Common myeloid progenitor, CD34-positive (primary cell): ENCODE measurements at regions of chr14 and their contacts with region 1.

Region 1: DNA sequence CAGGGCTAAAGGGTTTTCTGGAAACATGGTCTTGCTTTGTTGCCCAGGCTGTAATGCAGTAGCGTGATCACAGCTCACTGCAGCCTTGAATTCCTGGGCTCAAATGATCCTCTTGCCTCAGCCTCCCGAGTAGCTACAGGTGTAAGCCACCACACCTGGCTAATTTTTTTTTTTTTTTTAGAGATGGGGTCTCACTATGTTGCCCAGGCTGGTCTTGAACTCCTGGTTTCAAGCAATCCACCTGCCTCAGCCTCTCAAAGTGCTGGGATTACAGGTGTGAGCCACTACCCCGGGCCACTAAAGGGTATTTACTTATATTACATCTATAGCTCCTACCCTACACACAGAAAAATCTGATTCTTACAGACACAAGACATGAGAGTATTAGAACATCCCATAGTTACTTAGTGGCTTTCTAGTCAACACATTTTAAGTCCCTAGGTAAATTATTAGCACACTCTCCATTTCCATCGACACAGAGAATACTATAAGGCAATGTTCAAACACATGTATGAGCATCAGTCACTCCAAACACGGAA is 6.2 kb upstream of the DCAF11 start:
- DNase-seq: no peak
- H3K4me3 ChIP-seq: peak overlapping the region in 1 of 7 experiments; percentile 38
- H3K27ac ChIP-seq: peak overlapping the region in 1 of 2 experiments; percentile 17
- H3K4me1 ChIP-seq: peaks cover 3 to 20% (median 9%) of the 10 kb centered on the region in 4 experiments
- H3K27me3 ChIP-seq: no peaks in the 10 kb centered on the region

Region 2: GRCh38 chr14:24013654-24014514 is 94.5 kb before region 1 on chr14:
- CTCF ChIA-PET with region 1: interaction called, 16 read pairs
- POLR2A ChIA-PET with region 1: no interaction called
- DNase-seq: peak; percentile 73 to 85 (median 79)
- H3K4me3 ChIP-seq: no peak overlapping the region
- H3K27ac ChIP-seq: no peak overlapping the region
- H3K4me1 ChIP-seq: peaks cover 0 to 4% (median 0%) of the 10 kb centered on the region in 4 experiments
- H3K27me3 ChIP-seq: no peaks in the 10 kb centered on the region

Region 3: GRCh38 chr14:24080888-24081738 is 27.3 kb before region 1 on chr14:
- CTCF ChIA-PET with region 1: interaction called, 32 read pairs
- POLR2A ChIA-PET with region 1: no interaction called
- DNase-seq: peak; percentile 43 to 84 (median 80)
- H3K4me3 ChIP-seq: peak overlapping the region; percentile 60 to 81 (median 67)
- H3K27ac ChIP-seq: no peak overlapping the region
- H3K4me1 ChIP-seq: peaks cover 7 to 27% (median 26%) of the 10 kb centered on the region in 4 experiments
- H3K27me3 ChIP-seq: peaks cover 0 to 12% (median 7%) of the 10 kb centered on the region in 5 experiments

Region 4: DNA sequence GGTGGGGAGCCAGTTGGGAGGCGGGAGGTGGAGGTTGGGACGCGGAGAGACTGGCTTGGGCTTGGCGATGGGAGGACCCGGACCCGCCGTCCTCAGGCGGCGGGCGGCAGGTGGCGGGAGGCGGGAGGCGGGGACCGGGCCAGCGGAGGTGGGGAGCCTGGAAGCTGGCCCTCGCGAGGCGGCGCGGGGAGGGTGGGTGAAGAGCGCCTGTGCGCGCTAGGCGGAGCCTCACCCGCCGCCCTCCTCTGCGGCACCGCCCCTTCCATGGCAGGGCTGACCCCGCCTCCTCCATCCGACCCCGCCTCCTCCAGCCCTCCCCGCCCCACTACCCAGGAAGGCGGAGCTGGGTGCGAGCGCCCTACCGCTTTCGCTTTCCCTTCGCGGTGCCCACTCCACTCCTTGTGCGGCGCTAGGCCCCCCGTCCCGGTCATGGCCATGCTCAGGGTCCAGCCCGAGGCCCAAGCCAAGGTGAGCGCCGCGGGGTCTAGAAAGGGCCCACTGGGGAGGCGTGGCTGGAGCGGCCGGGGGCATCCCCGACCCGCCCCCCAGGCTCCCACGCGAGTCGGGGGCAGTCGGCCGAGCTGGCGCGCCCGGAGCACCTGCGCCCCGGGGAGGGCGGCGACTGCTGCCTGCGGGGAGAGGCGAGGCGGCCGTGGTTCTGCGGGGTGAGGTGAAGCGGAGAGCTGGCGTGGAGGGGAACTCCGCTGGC is 27.6 kb after region 1 on chr14 and contains the start of gene PSME1:
- CTCF ChIA-PET with region 1: interaction called, 46 read pairs
- POLR2A ChIA-PET with region 1: interaction called, 10 read pairs
- DNase-seq: peak; percentile 88 to 95 (median 94)
- H3K4me3 ChIP-seq: peak within 1 kb of the TSS; percentile 71 to 96 (median 87)
- H3K27ac ChIP-seq: peak within 1 kb of the TSS; percentile 58 to 83
- H3K4me1 ChIP-seq: peaks cover 2 to 56% (median 36%) of the 10 kb centered on the region in 4 experiments
- H3K27me3 ChIP-seq: no peaks in the 10 kb centered on the region

Region 5: GRCh38 chr14:24351517-24351916 is 243.1 kb after region 1 on chr14:
- CTCF ChIA-PET with region 1: no interaction called
- POLR2A ChIA-PET with region 1: no interaction called
- DNase-seq: peak in 2 of 3 donors; percentile 33 to 47
- H3K4me3 ChIP-seq: no peak overlapping the region
- H3K27ac ChIP-seq: no peak overlapping the region
- H3K4me1 ChIP-seq: no peaks in the 10 kb centered on the region
- H3K27me3 ChIP-seq: peaks cover 0 to 2% (median 0%) of the 10 kb centered on the region in 5 experiments